CD4-positive, alpha-beta memory T cell (primary cell): ENCODE measurements at regions of chr15 and their contacts with region 1.

Region 1: GRCh38 chr15:45705510-45706473 is 71.0 kb downstream of the SQOR start:
- DNase-seq: peak; percentile 66 to 73 (median 68)
- H3K4me3 ChIP-seq: peak overlapping the region; percentile 24 to 73
- H3K4me3 Mint-ChIP-seq: peak overlapping the region; percentile 91 to 98 (median 94)
- H3K27ac ChIP-seq: no peak overlapping the region
- H3K27ac Mint-ChIP-seq: peak overlapping the region in 6 of 7 donors; percentile 54 to 87 (median 66)
- H3K4me1 ChIP-seq: peaks cover 8% of the 10 kb centered on the region
- H3K4me1 Mint-ChIP-seq: peaks cover 10 to 15% (median 12%) of the 10 kb centered on the region in 4 donors
- H3K27me3 ChIP-seq: no peaks in the 10 kb centered on the region
- H3K27me3 Mint-ChIP-seq: peaks cover 0 to 3% of the 10 kb centered on the region in 2 donors

Region 2: DNA sequence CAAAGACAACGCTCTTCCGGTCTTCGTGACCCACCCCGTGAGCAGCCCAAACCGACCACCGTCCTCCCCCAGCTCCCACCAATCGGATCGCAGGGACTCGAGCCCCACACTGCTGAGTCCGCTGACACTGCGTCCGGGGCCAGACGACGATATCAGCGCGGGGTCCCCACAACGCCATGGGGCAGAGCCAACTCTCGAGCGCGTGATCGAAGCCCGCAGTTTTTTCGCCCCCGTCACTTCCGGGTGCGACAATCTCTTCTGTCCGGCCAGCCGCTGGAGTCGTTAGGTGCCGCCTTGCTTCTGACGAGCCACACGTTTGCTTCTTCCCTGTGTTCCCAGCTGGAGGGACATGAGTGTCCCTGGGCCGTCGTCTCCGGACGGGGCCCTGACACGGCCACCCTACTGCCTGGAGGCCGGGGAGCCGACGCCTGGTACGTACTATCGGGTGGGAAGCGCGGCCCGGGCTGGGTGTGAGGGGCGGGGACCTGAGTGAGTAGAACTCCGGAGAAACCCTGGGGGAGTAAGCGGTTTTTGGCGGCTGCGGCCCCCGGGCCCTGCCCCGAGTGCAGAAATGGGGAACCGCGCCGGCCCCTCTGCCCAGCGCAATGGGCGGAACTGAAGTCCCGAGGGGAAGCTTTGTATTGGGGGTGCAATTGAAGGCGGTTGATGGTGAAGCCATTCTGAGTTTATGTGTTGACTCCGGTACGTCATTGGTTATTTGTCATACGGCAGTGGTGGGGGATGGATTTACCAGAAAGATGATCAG is 118.5 kb before region 1 on chr15 and contains the start of gene BLOC1S6:
- CTCF ChIA-PET with region 1: interaction called, 12 read pairs
- POLR2A ChIA-PET with region 1: no interaction called
- intact Hi-C with region 1: no loop called
- DNase-seq: peak; percentile 87 to 91 (median 90)
- H3K4me3 ChIP-seq: peak within 1 kb of the TSS; percentile 89 to 99
- H3K4me3 Mint-ChIP-seq: peak within 1 kb of the TSS; percentile 96 to 100 (median 100)
- H3K27ac ChIP-seq: peak within 1 kb of the TSS; percentile 95
- H3K27ac Mint-ChIP-seq: peak within 1 kb of the TSS; percentile 100
- H3K4me1 ChIP-seq: peaks cover 44% of the 10 kb centered on the region
- H3K4me1 Mint-ChIP-seq: peaks cover 20 to 48% (median 37%) of the 10 kb centered on the region in 4 donors
- H3K27me3 ChIP-seq: no peaks in the 10 kb centered on the region
- H3K27me3 Mint-ChIP-seq: no peaks in the 10 kb centered on the region
- total RNA-seq, gene BLOC1S6: 43.0 to 43.9 TPM

Region 3: DNA sequence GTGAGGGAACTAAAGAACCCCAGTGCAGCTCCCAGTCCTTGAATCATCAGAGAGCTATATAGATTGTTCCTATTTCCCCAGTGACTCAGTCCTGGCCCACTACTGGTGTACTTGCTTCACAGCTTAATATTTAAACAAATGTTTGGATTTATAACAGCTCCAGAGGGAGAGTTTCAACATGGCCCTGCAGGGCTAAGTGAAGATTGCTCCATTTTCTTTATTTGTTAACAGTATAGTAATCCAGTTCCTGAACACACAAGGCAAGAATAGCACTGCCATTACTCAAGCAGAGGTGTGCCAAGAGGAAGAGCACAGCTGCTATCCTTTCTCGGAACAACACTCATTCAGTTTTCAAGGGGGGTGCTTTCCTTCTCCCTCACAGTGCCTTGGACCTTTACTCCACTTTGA is 64.4 kb before region 1 on chr15:
- CTCF ChIA-PET with region 1: interaction called, 31 read pairs
- POLR2A ChIA-PET with region 1: interaction called, 14 read pairs
- intact Hi-C with region 1: no loop called
- DNase-seq: no peak
- H3K4me3 ChIP-seq: no peak overlapping the region
- H3K4me3 Mint-ChIP-seq: peak overlapping the region in 1 of 8 donors; percentile 17
- H3K27ac ChIP-seq: no peak overlapping the region
- H3K27ac Mint-ChIP-seq: no peak overlapping the region
- H3K4me1 ChIP-seq: peaks cover 88% of the 10 kb centered on the region
- H3K4me1 Mint-ChIP-seq: peaks cover 53 to 100% (median 87%) of the 10 kb centered on the region in 4 donors
- H3K27me3 ChIP-seq: no peaks in the 10 kb centered on the region
- H3K27me3 Mint-ChIP-seq: no peaks in the 10 kb centered on the region

Region 4: DNA sequence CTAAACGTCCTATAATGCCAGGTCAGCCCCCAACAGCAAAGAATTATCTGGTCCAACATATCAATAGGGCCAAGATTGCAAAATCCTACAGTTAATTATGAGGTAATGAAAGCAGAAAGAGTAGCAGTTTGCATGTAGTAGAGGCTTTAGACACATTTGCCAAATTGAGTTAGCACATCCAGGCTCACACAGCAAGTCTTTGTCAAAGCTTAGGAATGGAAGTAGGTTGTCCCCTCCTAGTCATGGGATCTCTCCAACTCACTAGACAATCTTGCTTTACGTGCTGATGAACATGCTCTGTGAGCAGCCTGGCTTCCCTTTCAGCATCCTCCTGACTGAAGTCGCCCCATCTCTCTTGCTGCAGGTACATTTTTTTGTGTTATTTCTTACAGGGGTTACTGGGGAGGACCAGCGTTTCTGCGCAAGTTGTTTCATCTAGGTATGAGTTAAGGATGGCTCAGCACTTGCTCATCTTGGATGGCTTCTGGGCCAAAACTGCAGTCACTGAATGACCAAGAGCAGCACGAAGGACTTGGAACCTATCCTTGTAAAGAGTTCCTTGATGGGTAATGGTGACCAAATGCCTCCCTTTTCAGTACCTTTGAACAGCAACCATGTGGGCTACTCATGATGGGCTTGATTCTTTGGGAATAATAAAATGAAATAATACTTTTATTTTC is 15.1 kb before region 1 on chr15:
- CTCF ChIA-PET with region 1: interaction called, 24 read pairs
- POLR2A ChIA-PET with region 1: no interaction called
- intact Hi-C with region 1: no loop called
- DNase-seq: no peak
- H3K4me3 ChIP-seq: no peak overlapping the region
- H3K4me3 Mint-ChIP-seq: no peak overlapping the region
- H3K27ac ChIP-seq: no peak overlapping the region
- H3K27ac Mint-ChIP-seq: no peak overlapping the region
- H3K4me1 ChIP-seq: no peaks in the 10 kb centered on the region
- H3K4me1 Mint-ChIP-seq: peaks cover 0 to 2% (median 0%) of the 10 kb centered on the region in 4 donors
- H3K27me3 ChIP-seq: no peaks in the 10 kb centered on the region
- H3K27me3 Mint-ChIP-seq: no peaks in the 10 kb centered on the region

Region 5: DNA sequence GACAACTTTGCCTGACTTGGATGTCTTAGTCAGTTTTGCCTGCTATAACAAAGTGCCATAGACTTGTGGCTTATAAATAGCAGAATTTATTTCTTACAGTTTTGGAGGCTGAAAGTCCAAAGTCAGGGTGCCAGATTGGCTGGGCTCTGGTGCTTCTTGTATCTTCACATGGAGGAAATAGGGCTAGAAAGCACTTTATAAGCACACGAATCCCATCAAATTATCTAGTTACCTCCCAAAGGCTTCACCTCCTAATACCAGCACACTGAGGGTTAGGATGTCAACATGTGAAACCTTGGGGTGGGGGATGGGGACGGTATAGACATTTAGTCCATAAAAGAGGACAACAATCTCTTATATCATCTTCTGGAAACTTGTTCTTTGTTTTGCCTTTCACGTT is 45.8 kb after region 1 on chr15:
- CTCF ChIA-PET with region 1: no interaction called
- POLR2A ChIA-PET with region 1: no interaction called
- intact Hi-C with region 1: no loop called
- DNase-seq: no peak
- H3K4me3 ChIP-seq: no peak overlapping the region
- H3K4me3 Mint-ChIP-seq: no peak overlapping the region
- H3K27ac ChIP-seq: no peak overlapping the region
- H3K27ac Mint-ChIP-seq: no peak overlapping the region
- H3K4me1 ChIP-seq: no peaks in the 10 kb centered on the region
- H3K4me1 Mint-ChIP-seq: no peaks in the 10 kb centered on the region
- H3K27me3 ChIP-seq: no peaks in the 10 kb centered on the region
- H3K27me3 Mint-ChIP-seq: peaks cover 13 to 16% of the 10 kb centered on the region in 2 donors

Region 6: DNA sequence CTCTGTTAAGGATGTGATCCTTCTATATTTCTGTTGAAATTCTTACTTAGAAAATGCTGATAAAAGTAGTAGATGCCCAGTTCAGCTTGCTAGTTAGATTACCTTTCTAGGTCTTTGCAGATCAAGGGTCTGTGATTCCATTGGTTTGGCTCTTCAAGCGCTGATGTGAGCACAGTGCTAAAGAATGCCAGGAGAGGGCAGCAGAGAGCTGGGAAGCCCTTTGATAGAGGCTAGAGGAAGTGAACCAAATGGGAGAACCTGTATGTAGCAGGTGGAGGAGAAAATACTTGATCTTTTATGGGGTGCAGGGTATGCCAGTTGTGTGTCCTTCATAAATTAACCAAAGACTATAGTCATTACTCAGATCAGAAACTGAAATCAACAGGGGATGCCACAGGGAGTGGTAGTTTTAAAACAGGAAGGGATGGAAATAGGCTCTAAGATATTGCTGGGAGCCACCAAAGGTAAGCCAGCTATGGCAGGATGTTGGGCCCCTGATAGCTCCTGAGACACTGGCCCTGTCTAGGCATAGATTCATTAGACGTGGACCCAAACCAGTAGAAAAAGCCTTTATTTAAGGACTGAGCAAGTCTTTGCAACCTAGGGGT is 606.4 kb after region 1 on chr15:
- CTCF ChIA-PET with region 1: no interaction called
- POLR2A ChIA-PET with region 1: no interaction called
- intact Hi-C with region 1: loop called (anchors 5 kb)
- DNase-seq: peak in 4 of 5 donors; percentile 22 to 35 (median 27)
- H3K4me3 ChIP-seq: no peak overlapping the region
- H3K4me3 Mint-ChIP-seq: no peak overlapping the region
- H3K27ac ChIP-seq: no peak overlapping the region
- H3K27ac Mint-ChIP-seq: no peak overlapping the region
- H3K4me1 ChIP-seq: no peaks in the 10 kb centered on the region
- H3K4me1 Mint-ChIP-seq: no peaks in the 10 kb centered on the region
- H3K27me3 ChIP-seq: no peaks in the 10 kb centered on the region
- H3K27me3 Mint-ChIP-seq: no peaks in the 10 kb centered on the region